HAP-1 (cell line): ENCODE measurements at regions of chr11 and their contacts with region 1.

Region 1: DNA sequence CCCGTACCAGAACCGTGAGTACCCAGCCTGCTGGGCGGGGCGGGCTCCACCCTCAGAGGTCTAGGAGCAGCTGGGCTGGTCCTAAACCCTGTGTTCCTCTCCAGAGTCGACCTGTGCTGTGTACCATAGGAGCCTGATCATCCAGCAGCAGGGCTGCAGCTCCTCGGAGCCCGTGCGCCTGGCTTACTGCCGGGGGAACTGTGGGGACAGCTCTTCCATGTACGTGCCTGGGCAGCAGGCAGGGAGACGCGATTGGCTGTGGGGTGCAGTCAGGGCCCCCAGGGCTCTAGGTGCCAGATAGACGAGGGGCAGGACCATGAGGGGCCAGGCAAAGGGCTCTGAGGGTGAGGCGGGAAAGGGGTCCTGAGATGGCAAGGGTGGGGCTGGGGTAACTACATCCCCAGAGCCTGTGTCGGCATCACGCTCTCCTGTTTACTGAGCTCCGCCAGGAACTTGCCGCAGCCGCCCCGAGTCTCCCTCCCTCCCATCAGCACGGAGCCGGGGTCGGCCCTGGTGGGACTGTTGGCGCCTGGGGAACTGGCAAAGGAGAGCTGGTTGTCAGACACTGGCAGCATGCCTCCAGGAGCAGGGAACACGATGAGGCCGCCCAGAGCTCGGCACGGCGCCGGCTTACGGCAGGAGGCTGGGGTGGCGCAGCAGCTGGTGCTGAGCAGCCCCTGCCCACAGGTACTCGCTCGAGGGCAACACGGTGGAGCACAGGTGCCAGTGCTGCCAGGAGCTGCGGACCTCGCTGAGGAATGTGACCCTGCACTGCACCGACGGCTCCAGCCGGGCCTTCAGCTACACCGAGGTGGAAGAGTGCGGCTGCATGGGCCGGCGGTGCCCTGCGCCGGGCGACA is 22.9 kb upstream of the MUC5B start:
- DNase-seq: no peak
- H3K4me3 ChIP-seq: no peak overlapping the region
- H3K4me1 ChIP-seq: no peaks in the 10 kb centered on the region
- H3K27me3 ChIP-seq: peaks cover 19% of the 10 kb centered on the region; the same call in 1 of the 2 replicates

Region 2: DNA sequence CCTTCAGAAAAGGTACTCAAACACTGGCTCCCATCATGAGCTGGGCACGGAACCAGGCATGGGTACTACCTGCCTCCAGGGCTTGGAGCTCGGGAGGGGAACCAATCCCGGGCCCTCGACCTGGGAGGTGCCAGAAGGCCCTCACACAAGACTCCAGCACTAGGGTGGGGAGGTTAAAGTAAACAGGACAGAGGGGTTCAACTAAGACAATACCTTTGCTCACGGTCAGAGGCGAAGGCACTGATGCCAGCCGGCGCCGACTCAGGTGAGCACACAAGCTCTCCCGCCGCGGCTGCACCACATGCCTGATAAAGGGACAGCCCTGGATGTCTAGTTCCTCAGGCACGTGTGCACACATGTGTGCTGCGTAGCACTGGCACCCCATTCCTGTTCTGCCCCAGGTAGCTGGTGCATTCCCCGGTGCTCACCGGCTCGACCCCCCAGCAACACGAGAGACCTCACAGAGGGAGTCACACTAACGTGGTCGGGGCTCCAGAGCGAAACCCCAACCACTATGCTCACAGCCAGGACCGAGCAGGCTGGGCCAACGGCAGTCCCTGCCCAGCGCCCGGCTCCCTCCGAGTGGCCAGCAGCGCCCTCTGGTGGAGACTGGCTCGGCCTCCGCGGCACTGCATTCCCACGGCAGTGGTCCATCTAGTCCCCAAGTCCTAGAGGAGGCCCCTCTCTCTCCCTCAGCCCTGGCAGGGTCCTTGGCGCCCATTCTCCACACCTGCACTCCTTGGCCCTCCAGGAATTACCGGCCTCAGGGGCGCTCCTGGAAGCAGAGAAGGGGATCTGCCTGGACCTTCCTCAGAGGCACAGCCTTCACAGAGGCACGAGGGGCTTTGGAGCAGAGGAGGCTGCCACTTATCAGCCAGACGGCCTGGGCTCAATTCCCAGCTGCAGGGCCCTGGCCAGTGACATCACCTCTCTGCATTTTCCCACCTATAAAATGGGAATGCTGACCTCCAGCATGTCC is 315.4 kb after region 1 on chr11:
- in situ Hi-C with region 1: loop called (anchors 10 kb)
- DNase-seq: peak; percentile 27 to 89
- H3K4me3 ChIP-seq: no peak overlapping the region
- H3K4me1 ChIP-seq: peaks cover 4% of the 10 kb centered on the region
- H3K27me3 ChIP-seq: no peaks in the 10 kb centered on the region